Upper lobe of right lung (tissue), 1 donor: ENCODE measurements at regions of chr3 and their contacts with region 1.

Region 1: GRCh38 chr3:181700168-181701087 is 11.3 kb upstream of the SOX2 start:
- DNase-seq: no peak
- ATAC-seq: peak; percentile 83
- H3K4me3 ChIP-seq: no peak overlapping the region
- H3K27ac ChIP-seq: no peak overlapping the region
- H3K4me1 ChIP-seq: peaks cover 15% of the 10 kb centered on the region
- H3K27me3 ChIP-seq: peaks cover 95% of the 10 kb centered on the region
- CTCF ChIP-seq: peak; percentile 87

Region 2: DNA sequence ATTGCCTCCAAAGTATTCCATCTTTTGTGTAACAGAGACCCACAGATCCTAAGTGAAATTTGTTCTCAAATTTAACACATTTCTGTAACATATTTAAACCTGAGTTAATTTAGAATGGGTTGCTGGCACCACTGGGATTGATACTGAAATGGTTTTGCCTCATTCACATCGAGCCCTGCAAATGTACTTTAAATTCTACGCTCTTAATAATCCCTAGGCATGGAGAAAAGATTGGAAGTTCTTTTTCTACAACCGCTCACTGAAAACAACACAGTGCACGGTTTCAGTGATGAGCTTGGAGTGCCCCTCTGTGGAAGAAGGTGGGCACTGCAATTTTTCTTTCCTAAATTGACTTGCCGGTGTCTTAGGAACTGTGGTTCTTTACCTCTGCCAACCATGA is 983.0 kb after region 1 on chr3:
- intact Hi-C with region 1: loop called (anchors 10 kb)
- DNase-seq: no peak
- ATAC-seq: peak; percentile 94
- H3K4me3 ChIP-seq: peak overlapping the region; percentile 54
- H3K27ac ChIP-seq: no peak overlapping the region
- H3K4me1 ChIP-seq: peaks cover 7% of the 10 kb centered on the region
- H3K27me3 ChIP-seq: peaks cover 57% of the 10 kb centered on the region
- CTCF ChIP-seq: peak; percentile 89